Left colon (tissue), 2 donors: ENCODE measurements at regions of chr11 and their contacts with region 1.

Region 1: GRCh38 chr11:13955971-13956421 is 6.5 kb upstream of the SPON1 start:
- DNase-seq: peak; percentile 40 to 55
- ATAC-seq: peak; percentile 73

Region 2: GRCh38 chr11:14148653-14149273 is 192.8 kb after region 1 on chr11:
- intact Hi-C with region 1: loop called in 1 of 2 experiments (anchors 5 kb)
- DNase-seq: no peak
- ATAC-seq: peak; percentile 93

Region 3: GRCh38 chr11:14249121-14249963 is 293.3 kb after region 1 on chr11:
- intact Hi-C with region 1: loop called (anchors 5 to 10 kb)
- DNase-seq: peak in 1 of 2 donors; percentile 57
- ATAC-seq: peak; percentile 82